Activated T-helper 2 cell treated with anti-CD3 and anti-CD28 coated beads, Interferon-gamma antibody, Interleukin-2, Interleukin-4, amounts not matched to agents 10 μg/mL and 5 μg/mL and 100 μg/mL, durations not matched to agents 14 hours and 24 hours and 36 hours (primary cell): ENCODE measurements at regions of chr2 and their contacts with region 1.

Region 1: GRCh38 chr2:183838295-183838694 is 714.1 kb downstream of the NUP35 start:
- DNase-seq: no peak
- H3K4me3 Mint-ChIP-seq: no peak overlapping the region
- H3K27ac Mint-ChIP-seq: no peak overlapping the region
- H3K4me1 Mint-ChIP-seq: no peaks in the 10 kb centered on the region
- H3K27me3 Mint-ChIP-seq: no peaks in the 10 kb centered on the region

Region 2: GRCh38 chr2:183718246-183718645 is 120.0 kb before region 1 on chr2:
- intact Hi-C with region 1: no loop called
- DNase-seq: no peak
- H3K4me3 Mint-ChIP-seq: no peak overlapping the region
- H3K27ac Mint-ChIP-seq: no peak overlapping the region
- H3K4me1 Mint-ChIP-seq: no peaks in the 10 kb centered on the region
- H3K27me3 Mint-ChIP-seq: no peaks in the 10 kb centered on the region

Region 3: DNA sequence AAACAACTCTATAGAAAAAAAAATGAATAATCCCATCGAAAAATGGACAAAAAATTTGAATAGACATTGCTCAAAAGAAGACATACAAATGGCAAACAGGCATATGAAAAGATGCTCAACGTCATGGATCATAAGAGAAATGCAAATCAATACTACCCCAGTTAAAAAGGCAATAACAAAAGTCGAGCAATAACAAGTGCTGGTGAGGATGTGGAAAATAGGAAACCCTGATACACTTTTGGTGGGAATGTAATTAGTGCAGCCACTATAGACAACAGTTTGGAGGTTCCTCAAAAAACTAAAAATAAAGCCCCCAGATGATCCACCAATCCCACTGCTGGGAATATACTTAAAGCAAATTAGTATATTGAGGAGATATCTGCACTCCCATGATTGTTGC is 12.6 kb before region 1 on chr2:
- intact Hi-C with region 1: loop called (anchors 1 kb)
- DNase-seq: no peak
- H3K4me3 Mint-ChIP-seq: no peak overlapping the region
- H3K27ac Mint-ChIP-seq: no peak overlapping the region
- H3K4me1 Mint-ChIP-seq: no peaks in the 10 kb centered on the region
- H3K27me3 Mint-ChIP-seq: no peaks in the 10 kb centered on the region